ENCODE measurements at regions of chr19 and their contacts with region 1.

Region 1: GRCh38 chr19:17766543-17767131 is 15.4 kb downstream of the FCHO1 start:
- DNase-seq: peak; percentile 84 to 94 (median 86)
- H3K4me3 ChIP-seq: no peak overlapping the region
- H3K27ac ChIP-seq: no peak overlapping the region
- H3K4me1 ChIP-seq: peaks cover 3% of the 10 kb centered on the region
- H3K27me3 ChIP-seq: no peaks in the 10 kb centered on the region
- CTCF ChIP-seq: peak; percentile 69 to 81 (median 75)
- EP300 ChIP-seq: no peak
- POLR2A ChIP-seq: no peak

Region 2: GRCh38 chr19:17605761-17606745 is 160.6 kb before region 1 on chr19:
- intact Hi-C with region 1: loop called in 3 of 4 experiments (anchors 5 to 10 kb)
- DNase-seq: peak; percentile 86 to 91 (median 87)
- H3K4me3 ChIP-seq: peak overlapping the region; percentile 1
- H3K27ac ChIP-seq: peak overlapping the region; percentile 21 to 60
- H3K4me1 ChIP-seq: peaks cover 7% of the 10 kb centered on the region
- H3K27me3 ChIP-seq: no peaks in the 10 kb centered on the region
- CTCF ChIP-seq: peak; percentile 62 to 98 (median 95)
- EP300 ChIP-seq: no peak
- POLR2A ChIP-seq: no peak

Region 3: GRCh38 chr19:17703824-17704463 is 62.7 kb before region 1 on chr19:
- intact Hi-C with region 1: loop called in 1 of 4 experiments (anchors 2 kb)
- DNase-seq: no peak
- H3K4me3 ChIP-seq: no peak overlapping the region
- H3K27ac ChIP-seq: no peak overlapping the region
- H3K4me1 ChIP-seq: no peaks in the 10 kb centered on the region
- H3K27me3 ChIP-seq: no peaks in the 10 kb centered on the region
- CTCF ChIP-seq: peak in 2 of 3 donors; percentile 29 to 42
- EP300 ChIP-seq: no peak
- POLR2A ChIP-seq: no peak